CD8-positive, alpha-beta T cell (primary cell): ENCODE measurements at regions of chr7 and their contacts with region 1.

Region 1: GRCh38 chr7:157336383-157337315 is at the start of gene DNAJB6:
- DNase-seq: peak; percentile 92 to 99 (median 96)
- ATAC-seq: peak; percentile 83
- H3K4me3 ChIP-seq: peak within 1 kb of the TSS; percentile 80
- H3K4me3 Mint-ChIP-seq: peak within 1 kb of the TSS; percentile 98
- H3K27ac ChIP-seq: peak within 1 kb of the TSS; percentile 71 to 96
- H3K27ac Mint-ChIP-seq: peak within 1 kb of the TSS; percentile 99
- H3K4me1 ChIP-seq: peaks cover 29% of the 10 kb centered on the region
- H3K4me1 Mint-ChIP-seq: peaks cover 41% of the 10 kb centered on the region
- H3K27me3 ChIP-seq: no peaks in the 10 kb centered on the region
- H3K27me3 Mint-ChIP-seq: peaks cover 2% of the 10 kb centered on the region
- CTCF ChIP-seq: no peak
- total RNA-seq, gene DNAJB6: 312 to 335 TPM

Region 2: DNA sequence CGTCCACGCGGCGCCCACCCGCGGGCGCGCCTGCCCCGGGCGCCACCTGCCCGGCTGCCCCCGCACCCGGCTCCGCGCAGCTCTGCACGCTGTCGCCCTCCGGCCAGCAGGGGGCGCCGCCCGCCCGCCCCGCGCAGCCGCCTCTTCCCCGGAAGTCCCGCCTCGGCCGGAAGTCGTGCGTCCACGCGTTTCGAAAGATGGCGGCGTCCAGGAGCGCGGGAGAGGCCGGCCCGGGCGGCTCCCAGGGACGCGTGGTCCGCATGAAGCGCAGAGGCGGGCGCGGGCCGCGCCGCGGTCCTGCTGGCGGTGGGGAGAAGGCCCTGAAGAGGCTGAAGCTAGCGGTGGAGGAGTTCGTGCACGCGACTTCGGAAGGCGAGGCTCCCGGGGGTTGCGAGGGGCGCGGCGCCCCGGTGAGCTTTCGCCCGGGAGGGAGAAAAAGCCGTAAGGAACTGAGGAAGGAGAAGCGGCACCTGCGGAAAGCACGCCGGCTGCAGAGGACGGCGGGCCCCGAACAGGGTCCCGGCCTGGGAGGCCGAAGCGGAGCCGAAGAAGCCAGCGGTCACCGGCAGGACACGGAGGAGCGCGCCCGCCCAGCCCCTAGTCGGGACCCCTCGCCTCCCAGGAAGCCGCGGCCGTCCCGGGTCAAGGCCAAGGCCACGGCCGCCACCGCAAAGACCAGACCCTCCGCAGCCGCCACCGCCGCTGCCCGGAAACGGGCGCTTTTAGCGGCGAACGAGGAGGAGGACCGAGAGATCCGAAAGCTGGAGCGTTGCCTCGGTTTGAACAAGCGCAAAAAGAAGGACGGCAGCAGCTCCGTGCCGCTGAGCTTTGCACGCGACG is 386.9 kb before region 1 on chr7 and contains the start of gene NOM1:
- CTCF ChIA-PET with region 1: no interaction called
- POLR2A ChIA-PET with region 1: no interaction called
- intact Hi-C with region 1: loop called in 1 of 2 experiments (anchors 1 kb)
- DNase-seq: peak; percentile 85 to 96 (median 92)
- ATAC-seq: peak; percentile 94
- H3K4me3 ChIP-seq: peak within 1 kb of the TSS; percentile 95 to 97
- H3K4me3 Mint-ChIP-seq: peak within 1 kb of the TSS; percentile 97
- H3K27ac ChIP-seq: peak within 1 kb of the TSS; percentile 64 to 77
- H3K27ac Mint-ChIP-seq: peak within 1 kb of the TSS; percentile 79
- H3K4me1 ChIP-seq: peaks cover 25% of the 10 kb centered on the region
- H3K4me1 Mint-ChIP-seq: peaks cover 32% of the 10 kb centered on the region
- H3K27me3 ChIP-seq: no peaks in the 10 kb centered on the region
- H3K27me3 Mint-ChIP-seq: peaks cover 9% of the 10 kb centered on the region
- CTCF ChIP-seq: peak; percentile 67
- total RNA-seq, gene NOM1: 35.2 to 50.9 TPM

Region 3: DNA sequence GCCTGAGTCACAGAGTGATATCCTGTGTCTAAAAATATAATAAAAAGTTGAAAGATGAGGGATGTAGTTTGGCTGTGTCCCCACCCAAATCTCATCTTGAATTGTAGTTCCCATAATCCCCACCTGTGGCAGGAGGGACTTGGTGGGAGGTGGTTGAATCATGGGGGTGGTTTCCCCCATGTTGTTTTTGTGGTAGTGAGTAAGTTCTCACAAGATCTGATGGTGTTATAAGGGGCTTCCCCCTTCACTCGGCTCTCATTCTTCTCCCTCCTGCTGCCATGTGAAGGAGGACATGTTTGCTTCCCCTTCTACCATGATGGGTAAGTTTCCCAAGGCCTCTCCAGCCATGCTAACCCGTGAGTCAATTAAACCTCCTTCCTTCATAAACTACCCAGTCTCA is 223.0 kb before region 1 on chr7:
- CTCF ChIA-PET with region 1: no interaction called
- POLR2A ChIA-PET with region 1: no interaction called
- intact Hi-C with region 1: no loop called
- DNase-seq: peak in 1 of 9 experiments; percentile 30
- ATAC-seq: no peak
- H3K4me3 ChIP-seq: no peak overlapping the region
- H3K4me3 Mint-ChIP-seq: no peak overlapping the region
- H3K27ac ChIP-seq: no peak overlapping the region
- H3K27ac Mint-ChIP-seq: no peak overlapping the region
- H3K4me1 ChIP-seq: no peaks in the 10 kb centered on the region
- H3K4me1 Mint-ChIP-seq: no peaks in the 10 kb centered on the region
- H3K27me3 ChIP-seq: peaks cover 0 to 3% of the 10 kb centered on the region in 2 experiments
- H3K27me3 Mint-ChIP-seq: peaks cover 30% of the 10 kb centered on the region
- CTCF ChIP-seq: no peak

Region 4: DNA sequence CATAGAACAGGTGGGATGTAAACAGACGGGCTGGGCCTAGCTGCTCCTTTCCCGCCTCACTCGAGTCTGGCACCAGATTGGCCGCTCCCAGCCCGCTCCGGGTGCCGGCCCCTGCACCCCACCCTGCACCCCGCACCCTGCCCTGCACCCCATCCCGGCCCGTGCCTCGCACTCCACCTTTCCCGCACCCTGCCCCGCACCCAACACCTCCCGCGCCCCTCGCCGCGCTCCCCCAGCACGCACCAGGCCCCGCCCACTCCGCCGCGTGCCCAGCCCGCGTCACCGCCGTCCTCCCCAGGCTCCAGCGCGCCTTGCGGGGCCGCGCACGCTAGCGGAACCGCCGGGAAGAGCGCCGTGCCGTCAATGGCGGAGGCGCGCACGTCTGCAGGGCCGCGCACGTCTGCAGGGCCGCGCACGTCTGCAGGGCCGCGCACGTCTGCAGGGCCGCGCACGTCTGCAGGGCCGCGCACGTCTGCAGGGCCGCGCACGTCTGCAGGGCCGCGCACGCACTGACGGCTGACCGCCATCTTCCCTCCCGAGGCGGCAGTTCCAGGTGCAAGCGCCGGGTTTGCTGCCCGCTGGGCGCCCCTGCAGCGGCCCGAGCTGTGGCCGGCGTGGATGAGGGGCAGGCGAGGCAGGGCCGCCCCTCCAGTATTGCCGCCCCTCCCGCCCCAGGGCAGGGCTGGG is 198.1 kb before region 1 on chr7 and contains the start of gene UBE3C:
- CTCF ChIA-PET with region 1: no interaction called
- POLR2A ChIA-PET with region 1: no interaction called
- intact Hi-C with region 1: loop called (anchors 1 kb)
- DNase-seq: peak; percentile 81 to 97 (median 89)
- ATAC-seq: peak; percentile 85
- H3K4me3 ChIP-seq: peak within 1 kb of the TSS; percentile 57 to 59
- H3K4me3 Mint-ChIP-seq: peak within 1 kb of the TSS; percentile 84
- H3K27ac ChIP-seq: peak within 1 kb of the TSS; percentile 76 to 88
- H3K27ac Mint-ChIP-seq: peak within 1 kb of the TSS; percentile 94
- H3K4me1 ChIP-seq: peaks cover 38% of the 10 kb centered on the region
- H3K4me1 Mint-ChIP-seq: peaks cover 41% of the 10 kb centered on the region
- H3K27me3 ChIP-seq: no peaks in the 10 kb centered on the region
- H3K27me3 Mint-ChIP-seq: no peaks in the 10 kb centered on the region
- CTCF ChIP-seq: no peak
- total RNA-seq, gene UBE3C: 25.3 to 28.8 TPM

Region 5: GRCh38 chr7:157228864-157229422 is 107.7 kb before region 1 on chr7:
- CTCF ChIA-PET with region 1: interaction called, 4 read pairs
- POLR2A ChIA-PET with region 1: no interaction called
- intact Hi-C with region 1: loop called (anchors 1 to 5 kb)
- DNase-seq: peak in 8 of 9 experiments; percentile 2 to 52 (median 26)
- ATAC-seq: no peak
- H3K4me3 ChIP-seq: no peak overlapping the region
- H3K4me3 Mint-ChIP-seq: no peak overlapping the region
- H3K27ac ChIP-seq: no peak overlapping the region
- H3K27ac Mint-ChIP-seq: no peak overlapping the region
- H3K4me1 ChIP-seq: no peaks in the 10 kb centered on the region
- H3K4me1 Mint-ChIP-seq: no peaks in the 10 kb centered on the region
- H3K27me3 ChIP-seq: no peaks in the 10 kb centered on the region
- H3K27me3 Mint-ChIP-seq: no peaks in the 10 kb centered on the region
- CTCF ChIP-seq: peak; percentile 16

Region 6: GRCh38 chr7:157273208-157274093 is 63.2 kb before region 1 on chr7:
- CTCF ChIA-PET with region 1: interaction called, 5 read pairs
- POLR2A ChIA-PET with region 1: interaction called, 3 read pairs
- intact Hi-C with region 1: loop called (anchors 1 to 2 kb)
- DNase-seq: peak; percentile 32 to 80 (median 62)
- ATAC-seq: peak; percentile 92
- H3K4me3 ChIP-seq: no peak overlapping the region
- H3K4me3 Mint-ChIP-seq: no peak overlapping the region
- H3K27ac ChIP-seq: peak overlapping the region in 1 of 2 experiments; percentile 8
- H3K27ac Mint-ChIP-seq: peak overlapping the region; percentile 72
- H3K4me1 ChIP-seq: peaks cover 21% of the 10 kb centered on the region
- H3K4me1 Mint-ChIP-seq: peaks cover 24% of the 10 kb centered on the region
- H3K27me3 ChIP-seq: peaks cover 0 to 3% of the 10 kb centered on the region in 2 experiments
- H3K27me3 Mint-ChIP-seq: peaks cover 2% of the 10 kb centered on the region
- CTCF ChIP-seq: peak; percentile 90

Region 7: GRCh38 chr7:157301610-157302120 is 35.0 kb before region 1 on chr7:
- CTCF ChIA-PET with region 1: interaction called, 3 read pairs
- POLR2A ChIA-PET with region 1: interaction called, 12 read pairs
- intact Hi-C with region 1: loop called (anchors 1 kb)
- DNase-seq: no peak
- ATAC-seq: no peak
- H3K4me3 ChIP-seq: peak overlapping the region; percentile 10 to 25
- H3K4me3 Mint-ChIP-seq: peak overlapping the region; percentile 79
- H3K27ac ChIP-seq: peak overlapping the region; percentile 34 to 87
- H3K27ac Mint-ChIP-seq: peak overlapping the region; percentile 93
- H3K4me1 ChIP-seq: peaks cover 19% of the 10 kb centered on the region
- H3K4me1 Mint-ChIP-seq: peaks cover 31% of the 10 kb centered on the region
- H3K27me3 ChIP-seq: peaks cover 0 to 7% of the 10 kb centered on the region in 2 experiments
- H3K27me3 Mint-ChIP-seq: no peaks in the 10 kb centered on the region
- CTCF ChIP-seq: no peak

Region 8: DNA sequence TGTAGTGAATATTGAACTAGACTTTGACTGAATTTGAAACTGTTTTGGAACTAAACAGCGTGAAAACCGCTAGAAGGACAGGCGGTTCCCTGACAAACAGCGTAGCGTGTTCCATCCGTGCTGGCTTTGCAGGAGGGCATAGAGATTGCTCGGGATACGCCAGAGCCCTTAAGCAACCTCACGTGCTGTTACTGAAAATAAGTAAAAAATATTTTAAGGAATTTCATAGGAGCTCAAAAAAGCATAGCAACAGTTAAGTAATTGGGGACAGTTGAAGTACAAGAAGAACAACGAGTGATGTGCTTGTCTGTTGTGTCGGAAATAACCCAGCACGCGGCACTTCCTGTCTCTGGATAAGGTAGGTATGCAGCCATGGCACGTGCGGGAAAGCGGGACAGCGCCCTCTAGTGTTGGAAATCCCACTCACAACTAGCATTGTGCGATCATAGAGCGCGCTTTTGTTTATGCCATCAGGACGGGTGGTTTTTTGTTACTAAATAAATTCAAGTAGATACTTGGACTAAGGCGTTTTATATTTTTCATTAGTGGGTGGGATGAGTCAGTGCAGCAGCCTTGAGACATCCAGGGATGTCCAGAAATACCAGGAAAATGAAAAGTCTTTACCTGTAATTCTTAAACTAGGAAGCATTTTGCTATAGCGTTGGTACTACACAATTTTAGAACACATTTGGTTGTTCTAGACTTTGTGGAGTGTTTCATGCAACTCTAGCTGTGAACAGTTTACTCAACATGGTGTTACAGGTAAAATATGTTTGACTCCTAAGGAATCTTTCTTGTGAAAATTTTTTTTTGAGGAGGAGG is 50.5 kb after region 1 on chr7:
- CTCF ChIA-PET with region 1: interaction called, 6 read pairs
- POLR2A ChIA-PET with region 1: no interaction called
- intact Hi-C with region 1: loop called (anchors 2 to 5 kb)
- DNase-seq: peak; percentile 76 to 93 (median 89)
- ATAC-seq: peak; percentile 94
- H3K4me3 ChIP-seq: no peak overlapping the region
- H3K4me3 Mint-ChIP-seq: peak overlapping the region; percentile 1
- H3K27ac ChIP-seq: peak overlapping the region in 1 of 2 experiments; percentile 45
- H3K27ac Mint-ChIP-seq: peak overlapping the region; percentile 58
- H3K4me1 ChIP-seq: peaks cover 26% of the 10 kb centered on the region
- H3K4me1 Mint-ChIP-seq: peaks cover 41% of the 10 kb centered on the region
- H3K27me3 ChIP-seq: no peaks in the 10 kb centered on the region
- H3K27me3 Mint-ChIP-seq: no peaks in the 10 kb centered on the region
- CTCF ChIP-seq: peak; percentile 93